Heart left ventricle (tissue), 16 donors: ENCODE measurements at regions of chr1 and their contacts with region 1.

Region 1: GRCh38 chr1:47948126-47948525 is 49.1 kb downstream of the TRABD2B start:
- DNase-seq: no peak
- ATAC-seq: peak in 1 of 4 donors; percentile 44
- H3K4me3 ChIP-seq: no peak overlapping the region
- H3K27ac ChIP-seq: no peak overlapping the region
- H3K4me1 ChIP-seq: peaks cover 0 to 12% (median 0%) of the 10 kb centered on the region in 12 donors
- H3K27me3 ChIP-seq: no peaks in the 10 kb centered on the region
- CTCF ChIP-seq: peak in 5 of 12 donors; percentile 17 to 40 (median 28)
- POLR2A ChIP-seq: no peak

Region 2: GRCh38 chr1:47859092-47859743 is 88.9 kb before region 1 on chr1:
- intact Hi-C with region 1: no loop called
- DNase-seq: no peak
- ATAC-seq: no peak
- H3K4me3 ChIP-seq: no peak overlapping the region
- H3K27ac ChIP-seq: no peak overlapping the region
- H3K4me1 ChIP-seq: no peaks in the 10 kb centered on the region
- H3K27me3 ChIP-seq: no peaks in the 10 kb centered on the region
- CTCF ChIP-seq: no peak
- POLR2A ChIP-seq: no peak

Region 3: DNA sequence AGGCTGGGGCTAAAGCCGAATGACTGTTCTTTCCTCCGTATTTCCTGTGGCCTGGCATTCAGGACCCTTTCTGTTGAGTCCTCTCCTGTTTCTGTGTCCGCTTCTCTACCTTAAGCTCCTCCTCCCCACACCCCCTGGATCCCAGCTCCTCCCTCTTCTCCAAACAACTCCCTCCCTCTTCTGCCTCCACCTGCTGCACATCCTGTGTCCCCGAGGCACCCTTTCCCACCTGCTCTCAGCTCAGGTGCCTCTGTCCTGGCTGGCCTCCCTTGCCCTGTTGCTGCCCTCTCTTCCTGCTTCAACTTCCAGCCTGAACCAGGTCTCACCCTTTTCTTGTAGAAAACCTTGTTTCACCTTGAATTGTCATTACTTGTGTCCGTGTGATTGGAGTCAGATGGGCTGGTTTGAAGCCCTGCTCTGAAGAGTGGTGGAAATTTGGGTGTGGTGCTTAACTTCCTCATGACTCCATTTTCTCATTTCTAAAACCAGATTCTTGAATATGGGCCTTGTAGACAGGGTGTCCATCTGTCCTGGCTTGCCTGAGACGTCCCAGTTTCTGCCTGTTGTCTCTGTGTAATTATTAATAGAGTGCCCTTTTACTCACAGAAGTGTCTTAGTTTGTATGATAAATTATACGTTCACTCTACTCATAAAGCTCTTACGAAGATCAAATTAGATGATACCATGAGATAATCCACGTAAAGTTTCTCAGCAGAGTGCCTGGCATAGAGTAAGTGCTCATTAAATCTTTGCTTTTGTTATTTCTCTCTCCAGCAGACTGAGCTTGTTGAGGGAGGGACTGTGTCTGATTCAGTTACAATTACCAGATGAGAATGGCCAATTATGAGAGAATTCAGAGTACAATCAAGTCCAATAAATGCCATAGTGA is 108.0 kb after region 1 on chr1:
- intact Hi-C with region 1: loop called in 2 of 10 experiments (anchors 2 to 5 kb)
- DNase-seq: no peak
- ATAC-seq: no peak
- H3K4me3 ChIP-seq: no peak overlapping the region
- H3K27ac ChIP-seq: no peak overlapping the region
- H3K4me1 ChIP-seq: peaks cover 0 to 13% (median 2%) of the 10 kb centered on the region in 12 donors
- H3K27me3 ChIP-seq: no peaks in the 10 kb centered on the region
- CTCF ChIP-seq: no peak
- POLR2A ChIP-seq: no peak

Region 4: DNA sequence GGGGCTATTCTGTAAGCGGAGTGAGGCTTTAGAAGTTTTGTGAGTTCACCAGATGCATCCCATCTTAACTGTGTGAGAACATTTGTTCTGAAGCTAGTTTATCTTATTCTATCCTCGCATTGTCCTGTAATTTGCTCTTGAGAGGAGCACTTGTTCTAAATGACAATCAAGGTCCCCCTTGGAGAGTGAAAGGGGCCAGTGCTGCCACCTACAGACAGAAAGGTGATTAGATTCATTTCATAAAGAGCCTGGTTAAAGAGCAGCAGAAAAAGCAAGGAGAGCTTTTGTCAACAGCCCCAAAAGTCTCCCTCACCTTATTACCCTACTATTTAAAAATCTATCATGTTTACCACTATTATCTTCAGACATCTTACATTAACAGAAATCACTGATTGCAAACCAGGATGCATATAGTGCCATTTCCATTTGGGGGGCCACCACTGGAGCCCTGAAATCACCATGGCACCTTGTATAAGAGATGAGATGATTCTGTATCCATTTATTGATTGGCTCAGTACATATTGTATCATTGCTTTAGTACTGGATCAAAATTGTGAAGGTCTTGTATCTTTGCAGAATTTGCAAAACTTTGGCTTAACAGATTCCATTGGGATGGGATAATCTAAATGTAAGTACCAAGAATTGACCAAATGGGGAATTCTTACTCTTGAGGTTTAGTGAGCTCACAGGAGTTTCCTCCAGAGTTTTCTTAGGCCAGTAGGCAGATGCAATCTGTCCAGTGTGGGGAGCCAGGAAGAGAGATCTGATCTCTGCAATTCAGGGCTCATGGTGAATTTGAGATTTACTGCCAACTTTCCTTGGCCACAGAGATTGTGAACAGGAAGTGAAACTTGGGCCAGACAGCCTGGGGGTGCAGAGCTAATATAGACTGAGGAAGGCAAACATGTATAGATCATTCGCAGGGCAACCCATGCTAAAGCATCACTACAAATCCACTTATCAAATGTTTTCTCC is 113.3 kb after region 1 on chr1:
- intact Hi-C with region 1: loop called in 2 of 10 experiments (anchors 2 to 5 kb)
- DNase-seq: peak in 4 of 5 donors; percentile 33 to 57 (median 42)
- ATAC-seq: peak; percentile 65 to 86 (median 74)
- H3K4me3 ChIP-seq: no peak overlapping the region
- H3K27ac ChIP-seq: no peak overlapping the region
- H3K4me1 ChIP-seq: peaks cover 0 to 4% (median 0%) of the 10 kb centered on the region in 12 donors
- H3K27me3 ChIP-seq: no peaks in the 10 kb centered on the region
- CTCF ChIP-seq: peak; percentile 50 to 82 (median 74)
- POLR2A ChIP-seq: no peak